SK-N-SH (cell line): ENCODE measurements at regions of chr17 and their contacts with region 1.

Region 1: GRCh38 chr17:39621523-39622379 is 5.0 kb upstream of the PPP1R1B start:
- DNase-seq: peak; percentile 88
- H3K4me3 ChIP-seq: peak overlapping the region in 1 of 2 experiments; percentile 51; a peak in 2 of 4 replicates
- H3K27ac ChIP-seq: no peak overlapping the region
- H3K4me1 ChIP-seq: peaks cover 0 to 15% of the 10 kb centered on the region in 2 experiments; a peak in 1 of 4 replicates
- H3K27me3 ChIP-seq: peaks cover 6% of the 10 kb centered on the region
- CTCF ChIP-seq: peak; percentile 99
- EP300 ChIP-seq: no peak
- RAD21 ChIP-seq: peak; percentile 86

Region 2: DNA sequence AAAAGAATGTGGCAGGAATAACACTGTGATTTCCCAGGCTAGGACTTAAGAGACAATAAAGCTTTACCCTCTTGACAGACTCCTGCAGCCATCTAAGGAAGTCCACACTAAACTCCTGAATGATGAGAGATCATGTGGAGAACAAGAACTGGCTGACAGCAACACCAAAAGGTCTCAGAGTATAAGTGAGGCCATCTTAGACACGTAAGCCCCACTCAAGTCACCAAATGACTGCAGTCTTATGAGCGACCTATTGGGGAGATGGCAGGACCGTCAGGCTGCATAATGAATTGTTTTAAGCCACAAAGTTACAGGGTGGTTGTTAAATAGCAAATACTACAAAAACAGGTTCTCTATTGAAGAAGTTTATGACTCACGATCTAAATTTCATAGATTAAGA is 257.1 kb before region 1 on chr17:
- CTCF ChIA-PET with region 1: no interaction called
- POLR2A ChIA-PET with region 1: no interaction called
- DNase-seq: no peak
- H3K4me3 ChIP-seq: no peak overlapping the region
- H3K27ac ChIP-seq: peak overlapping the region in 1 of 2 experiments; percentile 27; a peak in 1 of 4 replicates
- H3K4me1 ChIP-seq: no peaks in the 10 kb centered on the region
- H3K27me3 ChIP-seq: no peaks in the 10 kb centered on the region
- CTCF ChIP-seq: no peak
- EP300 ChIP-seq: no peak
- RAD21 ChIP-seq: no peak

Region 3: DNA sequence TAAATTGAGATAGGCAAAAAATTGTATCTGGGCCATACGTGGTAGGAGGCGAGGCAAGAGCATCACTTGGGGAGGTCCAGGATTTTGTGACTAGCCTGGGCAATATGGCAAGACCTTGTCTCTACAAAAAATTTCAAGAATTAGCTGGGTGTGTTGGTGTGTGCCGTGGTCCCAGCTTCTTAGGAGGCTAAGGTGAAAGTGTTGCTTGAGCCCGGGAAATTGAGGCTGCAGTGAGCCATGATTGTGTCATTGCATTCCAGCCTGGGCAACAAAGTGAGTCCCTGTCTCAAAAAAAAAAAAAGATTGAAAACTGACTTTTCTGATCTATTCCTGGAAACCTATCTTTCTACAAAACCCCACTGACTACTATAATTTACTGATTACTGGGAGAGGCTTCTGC is 133.8 kb before region 1 on chr17:
- CTCF ChIA-PET with region 1: no interaction called
- POLR2A ChIA-PET with region 1: no interaction called
- DNase-seq: no peak
- H3K4me3 ChIP-seq: no peak overlapping the region
- H3K27ac ChIP-seq: no peak overlapping the region
- H3K4me1 ChIP-seq: peaks cover 0 to 4% of the 10 kb centered on the region in 2 experiments; a peak in 1 of 4 replicates
- H3K27me3 ChIP-seq: no peaks in the 10 kb centered on the region
- CTCF ChIP-seq: no peak
- EP300 ChIP-seq: no peak
- RAD21 ChIP-seq: no peak

Region 4: DNA sequence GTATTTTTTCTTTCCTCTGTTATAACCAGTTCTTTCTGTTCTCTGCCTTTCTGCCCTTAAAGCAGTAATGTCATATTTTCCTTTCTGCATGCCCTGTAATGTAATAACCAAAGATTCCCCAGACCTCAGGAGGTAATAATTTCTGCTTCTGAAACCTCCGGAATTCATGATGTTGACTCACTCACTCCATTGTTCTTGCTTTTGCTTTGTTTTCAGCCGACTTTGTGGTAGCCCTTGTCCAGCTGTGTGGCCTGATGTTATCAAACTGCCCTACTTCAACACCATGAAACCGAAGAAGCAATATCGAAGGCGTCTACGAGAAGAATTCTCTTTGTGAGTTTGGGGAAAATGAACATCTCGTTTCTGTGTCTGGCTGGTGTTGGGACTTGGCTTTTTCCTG is 104.5 kb before region 1 on chr17:
- CTCF ChIA-PET with region 1: interaction called, 12 read pairs
- POLR2A ChIA-PET with region 1: interaction called, 3 read pairs
- DNase-seq: no peak
- H3K4me3 ChIP-seq: no peak overlapping the region
- H3K27ac ChIP-seq: peak overlapping the region in 1 of 2 experiments; percentile 10; a peak in 1 of 4 replicates
- H3K4me1 ChIP-seq: no peaks in the 10 kb centered on the region
- H3K27me3 ChIP-seq: no peaks in the 10 kb centered on the region
- CTCF ChIP-seq: no peak
- EP300 ChIP-seq: no peak
- RAD21 ChIP-seq: no peak

Region 5: DNA sequence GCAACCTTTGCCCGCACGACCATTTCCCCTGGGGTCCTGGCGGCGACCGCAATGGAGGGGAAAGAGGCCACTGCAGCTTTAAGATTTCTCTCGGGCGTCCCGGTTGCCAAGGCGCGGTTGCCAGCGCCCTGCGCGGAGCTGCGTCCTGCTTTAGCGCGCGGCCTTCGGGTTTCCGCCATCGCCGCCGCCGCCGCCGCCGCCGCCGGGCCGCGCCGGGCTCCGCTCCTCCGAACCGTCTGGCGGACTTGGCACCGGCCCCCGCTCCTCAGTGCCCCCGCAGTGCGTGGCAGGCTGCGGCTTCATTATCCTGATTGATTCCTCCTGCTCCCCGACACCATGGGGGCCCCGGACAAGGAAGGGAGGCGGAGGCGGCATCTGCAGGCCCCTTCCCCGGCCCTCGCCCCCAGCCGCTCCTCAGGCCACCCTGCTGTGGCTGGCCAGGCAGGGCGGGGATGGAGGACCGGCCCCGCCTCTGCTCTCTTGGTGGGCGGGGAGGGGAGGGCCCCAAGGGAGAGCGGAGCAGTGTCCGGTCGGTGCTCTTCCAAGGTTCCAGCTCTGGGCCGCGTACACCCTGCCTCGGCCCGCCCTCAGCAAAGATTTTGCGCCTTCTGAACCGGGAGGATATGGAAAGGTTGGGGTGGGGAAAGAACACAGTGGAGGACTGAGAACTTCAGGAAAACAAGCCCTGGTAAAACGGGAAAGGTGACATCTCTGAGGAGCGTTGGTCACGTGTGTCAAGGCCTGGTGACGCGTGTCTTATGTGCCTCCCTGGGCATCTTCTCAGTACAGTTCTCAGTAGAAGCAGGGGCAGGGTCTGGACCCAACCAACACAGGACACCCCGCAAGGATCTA is 48.1 kb before region 1 on chr17:
- CTCF ChIA-PET with region 1: interaction called, 64 read pairs
- POLR2A ChIA-PET with region 1: no interaction called
- DNase-seq: peak; percentile 96
- H3K4me3 ChIP-seq: peak overlapping the region; percentile 63 to 68
- H3K27ac ChIP-seq: peak overlapping the region; percentile 68 to 77; a peak in 3 of 4 replicates
- H3K4me1 ChIP-seq: peaks cover 0 to 8% of the 10 kb centered on the region in 2 experiments; a peak in 1 of 4 replicates
- H3K27me3 ChIP-seq: no peaks in the 10 kb centered on the region
- CTCF ChIP-seq: no peak
- EP300 ChIP-seq: no peak; a peak in 1 of 4 replicates
- RAD21 ChIP-seq: no peak

Region 6: DNA sequence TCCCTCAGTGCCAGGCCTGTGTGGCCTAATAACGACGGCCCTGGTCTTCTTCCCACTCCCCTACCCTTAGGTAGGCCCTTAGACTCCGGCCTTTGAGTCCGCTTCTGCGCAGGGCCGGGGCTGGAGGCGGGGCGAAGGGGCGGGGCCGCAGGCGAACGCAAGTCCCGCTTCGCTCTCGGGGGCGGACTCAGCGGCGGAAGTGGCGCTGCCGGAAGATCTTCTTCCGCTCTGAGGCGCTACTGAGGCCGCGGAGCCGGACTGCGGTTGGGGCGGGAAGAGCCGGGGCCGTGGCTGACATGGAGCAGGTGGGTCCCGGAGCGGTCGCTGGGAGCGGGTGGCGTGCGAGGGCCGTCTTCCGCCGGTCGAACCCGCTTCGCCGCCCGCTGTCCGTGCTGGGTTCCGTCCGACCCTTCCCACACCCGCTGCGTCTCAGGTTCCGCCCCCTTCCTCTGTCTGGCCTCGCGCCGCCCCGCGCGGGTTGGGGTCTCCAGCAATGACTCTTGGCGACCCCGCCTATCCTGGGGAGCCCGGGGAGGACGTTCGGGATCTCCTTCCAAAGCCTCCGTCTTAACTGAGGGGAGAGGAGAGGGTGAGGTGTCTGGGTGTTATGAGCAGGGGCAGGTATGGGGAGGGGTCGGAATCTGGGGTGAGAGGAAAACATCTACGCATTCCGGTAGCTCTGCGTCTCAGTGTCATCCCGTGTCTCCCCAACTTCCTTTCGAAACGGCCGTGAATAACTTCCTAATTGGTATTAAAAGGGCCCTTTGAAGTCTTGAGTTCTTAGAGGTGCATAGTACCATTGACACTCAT is 15.4 kb after region 1 on chr17 and contains the start of gene STARD3:
- CTCF ChIA-PET with region 1: interaction called, 332 read pairs
- POLR2A ChIA-PET with region 1: no interaction called
- DNase-seq: peak; percentile 96
- H3K4me3 ChIP-seq: peak within 1 kb of the TSS; percentile 88 to 97
- H3K27ac ChIP-seq: peak within 1 kb of the TSS; percentile 59 to 85
- H3K4me1 ChIP-seq: peaks cover 0 to 21% of the 10 kb centered on the region in 2 experiments; a peak in 2 of 4 replicates
- H3K27me3 ChIP-seq: no peaks in the 10 kb centered on the region
- CTCF ChIP-seq: no peak
- EP300 ChIP-seq: no peak
- RAD21 ChIP-seq: no peak
- polyA plus RNA-seq, gene STARD3: 76.8 and 78.0 TPM in 2 replicates

Region 7: DNA sequence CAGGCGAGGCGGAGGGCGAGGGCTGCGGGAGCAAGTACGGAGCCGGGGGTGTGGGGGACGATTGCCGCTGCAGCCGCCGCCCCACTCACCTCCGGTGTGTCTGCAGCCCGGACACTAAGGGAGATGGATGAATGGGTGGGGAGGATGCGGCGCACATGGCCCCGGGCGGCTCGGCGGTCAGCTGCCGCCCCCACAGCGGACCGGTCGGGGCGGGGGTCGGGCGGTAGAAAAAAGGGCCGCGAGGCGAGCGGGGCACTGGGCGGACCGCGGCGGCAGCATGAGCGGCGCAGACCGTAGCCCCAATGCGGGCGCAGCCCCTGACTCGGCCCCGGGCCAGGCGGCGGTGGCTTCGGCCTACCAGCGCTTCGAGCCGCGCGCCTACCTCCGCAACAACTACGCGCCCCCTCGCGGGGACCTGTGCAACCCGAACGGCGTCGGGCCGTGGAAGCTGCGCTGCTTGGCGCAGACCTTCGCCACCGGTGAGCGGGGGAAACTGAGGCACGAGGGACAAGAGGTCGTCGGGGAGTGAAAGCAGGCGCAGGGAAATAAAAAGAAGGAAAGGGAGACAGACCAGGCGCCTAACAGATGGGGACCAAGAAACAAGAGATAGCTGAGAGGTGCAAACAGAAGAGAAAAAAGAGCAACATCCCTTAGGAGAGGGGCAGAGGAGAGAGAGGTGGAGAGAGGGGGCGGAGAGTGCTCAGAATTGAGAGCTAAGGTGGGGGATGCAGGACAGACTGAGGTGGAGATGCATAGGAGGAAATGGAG is 46.6 kb after region 1 on chr17 and contains the start of gene PNMT:
- CTCF ChIA-PET with region 1: interaction called, 279 read pairs
- POLR2A ChIA-PET with region 1: interaction called, 4 read pairs
- DNase-seq: peak; percentile 93
- H3K4me3 ChIP-seq: peak within 1 kb of the TSS; percentile 36 to 49
- H3K27ac ChIP-seq: no peak within 1 kb of the TSS
- H3K4me1 ChIP-seq: peaks cover 0 to 12% of the 10 kb centered on the region in 2 experiments; a peak in 1 of 4 replicates
- H3K27me3 ChIP-seq: no peaks in the 10 kb centered on the region
- CTCF ChIP-seq: peak; percentile 61
- EP300 ChIP-seq: no peak
- RAD21 ChIP-seq: peak; percentile 28; the same call in 1 of the 2 replicates
- polyA plus RNA-seq, gene PNMT: 0.05 and 0.07 TPM in 2 replicates

Region 8: GRCh38 chr17:39754161-39754951 is 132.6 kb after region 1 on chr17:
- CTCF ChIA-PET with region 1: interaction called, 33 read pairs
- POLR2A ChIA-PET with region 1: interaction called, 5 read pairs
- DNase-seq: peak; percentile 98
- H3K4me3 ChIP-seq: peak overlapping the region; percentile 60 to 62
- H3K27ac ChIP-seq: peak overlapping the region in 1 of 2 experiments; percentile 72; a peak in 2 of 4 replicates
- H3K4me1 ChIP-seq: peaks cover 0 to 12% of the 10 kb centered on the region in 2 experiments; a peak in 1 of 4 replicates
- H3K27me3 ChIP-seq: peaks cover 23% of the 10 kb centered on the region; the same call in 1 of the 2 replicates
- CTCF ChIP-seq: peak; percentile 65
- EP300 ChIP-seq: no peak; a peak in 1 of 4 replicates
- RAD21 ChIP-seq: peak; percentile 72